ENCODE measurements at regions of chr1 and their contacts with region 1.

Region 1: GRCh38 chr1:152001391-152002249 is 8.0 kb upstream of the S100A10 start:
- DNase-seq: peak; percentile 88
- ATAC-seq: peak; percentile 79
- H3K4me3 Mint-ChIP-seq: no peak overlapping the region
- H3K27ac Mint-ChIP-seq: no peak overlapping the region
- H3K4me1 Mint-ChIP-seq: peaks cover 21% of the 10 kb centered on the region
- H3K27me3 Mint-ChIP-seq: peaks cover 26% of the 10 kb centered on the region

Region 2: DNA sequence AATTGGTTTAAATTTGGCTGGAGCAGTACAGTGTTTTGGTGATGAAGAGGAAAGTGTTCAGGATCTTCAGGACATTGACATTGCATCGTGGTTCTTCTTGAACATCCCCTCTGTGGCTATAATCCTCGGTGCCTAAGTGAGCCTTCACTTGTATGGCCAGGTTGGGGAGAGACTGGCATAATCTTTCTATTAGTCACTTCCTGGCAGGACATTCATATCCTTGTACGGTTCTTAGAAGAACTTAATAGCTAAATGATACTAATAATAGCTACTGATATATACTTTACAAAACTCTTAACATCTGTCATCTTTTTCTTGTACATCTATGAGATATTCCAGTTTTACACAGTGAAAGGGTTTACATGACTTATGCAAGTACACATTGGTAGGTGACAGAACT is 320.8 kb before region 1 on chr1:
- CTCF ChIA-PET with region 1: no interaction called
- DNase-seq: no peak
- ATAC-seq: no peak
- H3K4me3 Mint-ChIP-seq: no peak overlapping the region
- H3K27ac Mint-ChIP-seq: no peak overlapping the region
- H3K4me1 Mint-ChIP-seq: peaks cover 8% of the 10 kb centered on the region
- H3K27me3 Mint-ChIP-seq: no peaks in the 10 kb centered on the region

Region 3: DNA sequence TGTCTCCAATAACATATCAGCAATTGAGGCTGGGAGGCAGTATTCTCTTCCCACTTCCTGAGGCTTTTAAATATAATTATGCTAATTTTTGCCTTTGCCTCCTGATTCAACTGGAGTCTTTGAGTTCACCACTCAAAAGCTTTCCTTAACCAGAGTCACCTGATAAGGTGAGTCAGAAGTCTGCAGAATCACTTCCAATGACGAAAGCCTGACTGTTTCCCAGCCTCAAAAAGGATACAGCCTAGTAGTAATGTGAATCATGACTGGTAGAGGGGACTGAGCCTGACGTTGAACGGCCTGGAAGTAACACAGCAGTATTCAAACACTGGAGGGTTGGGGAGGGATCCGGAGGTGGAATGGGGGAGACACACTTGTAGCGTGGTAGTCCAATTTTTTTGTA is 227.9 kb before region 1 on chr1:
- CTCF ChIA-PET with region 1: no interaction called
- DNase-seq: no peak
- ATAC-seq: no peak
- H3K4me3 Mint-ChIP-seq: no peak overlapping the region
- H3K27ac Mint-ChIP-seq: no peak overlapping the region
- H3K4me1 Mint-ChIP-seq: no peaks in the 10 kb centered on the region
- H3K27me3 Mint-ChIP-seq: no peaks in the 10 kb centered on the region

Region 4: GRCh38 chr1:151881456-151881855 is 120.2 kb before region 1 on chr1:
- CTCF ChIA-PET with region 1: interaction called, 31 read pairs
- DNase-seq: no peak
- ATAC-seq: no peak
- H3K4me3 Mint-ChIP-seq: no peak overlapping the region
- H3K27ac Mint-ChIP-seq: no peak overlapping the region
- H3K4me1 Mint-ChIP-seq: no peaks in the 10 kb centered on the region
- H3K27me3 Mint-ChIP-seq: no peaks in the 10 kb centered on the region

Region 5: DNA sequence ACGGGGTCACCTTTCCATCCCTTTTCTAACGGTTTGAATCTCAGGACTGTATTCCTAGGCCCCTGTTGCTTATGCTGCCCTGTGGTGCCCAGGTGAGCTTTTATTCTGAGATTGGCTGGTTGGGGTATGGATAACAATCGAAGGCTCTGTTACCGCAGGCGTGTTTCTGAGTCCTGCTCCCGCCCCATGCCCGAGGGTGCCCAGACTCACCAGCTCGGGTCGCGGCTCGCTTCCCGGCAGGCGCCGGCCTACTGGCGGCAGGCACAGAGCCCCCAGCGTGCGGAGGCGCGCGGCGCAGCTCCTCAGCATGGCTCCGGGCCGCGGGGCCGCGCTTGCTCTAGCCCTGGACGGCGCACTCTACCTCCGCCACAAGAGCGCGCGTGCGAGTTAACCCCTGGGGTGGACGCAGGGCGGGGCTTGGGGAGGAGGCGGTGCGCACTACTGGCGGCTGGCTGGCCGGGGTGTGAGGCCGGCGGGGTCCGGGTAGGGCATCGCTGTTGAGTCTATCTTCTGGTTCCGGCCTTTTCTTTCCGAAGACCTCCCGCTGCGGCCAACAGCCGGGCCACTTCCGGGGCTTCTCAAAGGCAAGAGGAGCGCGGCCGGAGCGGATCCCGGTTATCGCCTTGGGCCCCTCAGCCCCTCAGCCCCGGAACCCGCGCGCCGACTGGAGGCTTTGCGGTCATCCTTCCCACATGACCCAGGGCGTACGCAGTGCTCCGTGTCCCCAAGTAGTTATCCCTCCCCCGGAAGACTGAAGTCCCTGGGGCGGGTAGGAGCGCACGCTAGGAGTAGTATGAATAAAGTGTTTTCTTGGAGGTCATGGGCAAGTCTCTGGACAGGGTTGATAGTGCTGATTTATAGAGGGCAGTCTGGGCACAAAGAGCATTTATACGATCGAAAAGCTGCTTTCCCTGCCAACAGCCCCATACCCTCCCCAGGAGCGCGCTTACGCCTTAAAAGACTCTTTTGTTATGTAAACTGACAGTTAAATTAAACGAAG is 92.2 kb before region 1 on chr1 and contains the start of gene THEM4:
- CTCF ChIA-PET with region 1: interaction called, 17 read pairs
- DNase-seq: peak; percentile 97
- ATAC-seq: peak; percentile 95
- H3K4me3 Mint-ChIP-seq: peak within 1 kb of the TSS; percentile 86
- H3K27ac Mint-ChIP-seq: peak within 1 kb of the TSS; percentile 85
- H3K4me1 Mint-ChIP-seq: peaks cover 36% of the 10 kb centered on the region
- H3K27me3 Mint-ChIP-seq: no peaks in the 10 kb centered on the region
- total RNA-seq, gene THEM4: 19.1 to 20.9 TPM

Region 6: DNA sequence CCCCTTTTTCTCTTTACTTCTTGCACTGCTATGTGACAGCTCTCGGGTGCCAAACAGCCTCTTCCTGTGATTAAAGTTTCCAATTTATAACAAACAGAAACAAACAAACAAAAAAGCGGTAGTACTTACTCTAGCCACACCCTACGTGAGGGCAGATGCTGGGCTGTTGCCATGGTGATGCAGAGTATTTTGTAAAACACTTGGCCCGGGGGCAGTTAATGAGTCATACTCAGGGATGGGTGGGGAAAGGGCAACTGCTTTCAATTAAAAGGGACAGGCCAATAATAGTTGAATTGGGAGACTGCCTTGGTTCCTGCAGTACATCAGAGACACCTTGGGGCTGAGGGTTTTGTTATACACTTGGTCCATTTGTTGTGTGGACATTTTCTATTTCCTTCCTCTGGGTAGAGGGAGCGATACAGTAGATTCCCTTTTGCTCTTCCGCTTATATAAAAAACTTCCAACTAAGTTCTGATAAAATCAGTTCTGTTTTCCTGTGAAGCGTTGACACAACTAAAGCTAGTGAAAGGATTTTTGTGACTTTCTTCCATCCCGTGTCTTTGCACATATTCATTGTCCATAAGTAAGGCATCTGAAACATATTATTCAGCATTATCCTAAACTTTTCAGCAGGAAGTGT is 55.8 kb before region 1 on chr1:
- CTCF ChIA-PET with region 1: interaction called, 230 read pairs
- DNase-seq: peak; percentile 94
- ATAC-seq: peak; percentile 83
- H3K4me3 Mint-ChIP-seq: peak overlapping the region; percentile 54
- H3K27ac Mint-ChIP-seq: peak overlapping the region; percentile 88
- H3K4me1 Mint-ChIP-seq: peaks cover 34% of the 10 kb centered on the region
- H3K27me3 Mint-ChIP-seq: no peaks in the 10 kb centered on the region

Region 7: GRCh38 chr1:151976858-151977257 is 24.8 kb before region 1 on chr1:
- CTCF ChIA-PET with region 1: interaction called, 522 read pairs
- DNase-seq: no peak
- ATAC-seq: no peak
- H3K4me3 Mint-ChIP-seq: no peak overlapping the region
- H3K27ac Mint-ChIP-seq: no peak overlapping the region
- H3K4me1 Mint-ChIP-seq: peaks cover 22% of the 10 kb centered on the region
- H3K27me3 Mint-ChIP-seq: peaks cover 17% of the 10 kb centered on the region

Region 8: GRCh38 chr1:152034646-152035405 is 33.2 kb after region 1 on chr1:
- CTCF ChIA-PET with region 1: interaction called, 13 read pairs
- DNase-seq: peak; percentile 83
- ATAC-seq: peak; percentile 72
- H3K4me3 Mint-ChIP-seq: peak overlapping the region; percentile 96
- H3K27ac Mint-ChIP-seq: peak overlapping the region; percentile 94
- H3K4me1 Mint-ChIP-seq: peaks cover 40% of the 10 kb centered on the region
- H3K27me3 Mint-ChIP-seq: no peaks in the 10 kb centered on the region